ENCODE measurements at regions of chr1 and their contacts with region 1.

Region 1: DNA sequence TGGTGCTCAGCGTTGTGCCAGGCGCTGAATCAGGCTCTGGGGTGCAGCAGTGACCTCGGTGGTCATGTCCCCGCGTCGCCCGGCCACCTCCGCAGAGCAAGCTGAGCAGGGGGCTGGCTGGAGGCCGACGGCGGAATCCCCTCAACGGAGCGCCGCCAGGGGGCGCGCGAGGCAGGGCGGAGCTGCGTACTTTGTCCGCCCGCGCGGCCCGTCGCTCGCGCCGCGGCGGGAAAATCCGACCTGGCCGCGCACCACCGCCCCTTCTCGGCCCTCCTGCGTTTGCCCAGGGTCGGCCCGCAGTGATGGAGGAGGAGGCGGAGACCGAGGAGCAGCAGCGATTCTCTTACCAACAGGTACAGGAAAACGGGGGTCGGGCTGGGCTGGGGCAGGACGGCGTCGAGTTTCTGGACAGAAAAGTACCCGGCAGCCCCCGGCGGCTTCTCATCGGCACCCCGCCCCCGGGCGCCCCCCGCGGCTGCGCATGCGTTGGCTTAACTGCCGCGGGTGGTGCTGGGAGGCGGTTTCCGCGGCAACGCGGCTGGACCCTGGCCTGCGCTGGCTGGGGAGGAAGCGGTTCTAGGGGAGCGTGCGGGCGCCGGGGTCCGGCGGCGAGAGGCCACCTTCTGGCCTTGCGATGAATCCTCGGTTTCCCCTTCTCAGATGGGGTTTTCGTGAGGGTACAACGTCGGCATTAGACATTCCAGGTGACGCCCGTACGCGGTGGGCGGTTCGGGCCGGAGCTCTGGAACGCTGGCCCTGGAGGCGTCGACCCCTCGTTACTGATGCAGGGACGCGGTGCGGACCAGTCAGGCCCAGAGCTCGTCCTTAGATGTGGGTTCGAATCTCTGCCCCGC is at the start of gene CENPS:
- DNase-seq: peak; percentile 95
- H3K4me3 ChIP-seq: peak within 1 kb of the TSS; percentile 52 to 85 (median 68)
- H3K27ac ChIP-seq: peak within 1 kb of the TSS; percentile 78 to 85 (median 82)
- H3K4me1 ChIP-seq: peaks cover 0 to 19% (median 14%) of the 10 kb centered on the region in 4 donors
- H3K27me3 ChIP-seq: no peaks in the 10 kb centered on the region
- CTCF ChIP-seq: peak; percentile 94 to 99 (median 98)
- EP300 ChIP-seq: no peak
- POLR2A ChIP-seq: peak; percentile 37
- total RNA-seq, gene CENPS: 6.8 to 8.2 TPM in 2 of 4 donors, not detected in the others

Region 2: GRCh38 chr1:10378081-10378841 is 52.2 kb before region 1 on chr1:
- in situ Hi-C with region 1: loop called in 1 of 4 experiments (anchors 10 kb)
- intact Hi-C with region 1: loop called (anchors 5 kb)
- DNase-seq: no peak
- H3K4me3 ChIP-seq: no peak overlapping the region
- H3K27ac ChIP-seq: peak overlapping the region in 2 of 4 donors; percentile 44 to 68
- H3K4me1 ChIP-seq: no peaks in the 10 kb centered on the region
- H3K27me3 ChIP-seq: no peaks in the 10 kb centered on the region
- CTCF ChIP-seq: no peak
- EP300 ChIP-seq: no peak
- POLR2A ChIP-seq: no peak

Region 3: DNA sequence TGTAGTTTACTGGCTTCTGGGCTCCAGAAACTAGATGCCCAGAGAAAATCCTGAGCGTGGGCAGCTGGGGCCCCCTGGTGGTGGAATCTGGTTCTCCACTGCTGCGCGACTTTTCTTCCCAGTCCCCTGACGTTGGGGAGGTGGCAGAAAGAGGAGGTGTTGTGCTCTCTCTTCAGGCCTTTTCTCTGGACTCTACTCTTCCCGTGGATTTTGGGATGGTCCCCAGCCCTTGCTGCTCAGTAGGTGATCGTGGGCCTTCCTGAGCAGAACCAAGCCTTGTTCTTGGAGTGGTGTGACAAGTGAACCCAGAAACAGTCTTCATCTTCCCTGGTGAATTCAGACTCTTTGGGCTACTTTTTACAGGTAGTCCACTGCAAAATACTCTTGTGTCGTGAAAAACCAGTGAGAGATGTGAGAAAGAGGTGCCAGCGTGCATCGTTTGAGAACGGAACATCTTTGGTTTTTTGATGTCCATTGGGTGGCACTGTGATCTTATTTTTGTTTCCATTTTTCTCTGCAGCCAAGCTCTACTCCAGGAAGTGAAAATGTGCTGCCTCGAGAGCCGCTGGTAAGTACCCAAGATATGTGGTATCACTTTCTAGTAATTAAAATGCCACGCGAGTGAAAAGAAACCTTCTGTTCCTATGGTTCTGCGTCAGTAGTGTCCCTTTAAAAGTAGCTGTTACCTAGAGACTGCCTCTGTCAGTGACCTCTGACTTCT is 64.5 kb after region 1 on chr1:
- in situ Hi-C with region 1: loop called in 1 of 4 experiments (anchors 10 kb)
- intact Hi-C with region 1: loop called (anchors 2 kb)
- DNase-seq: peak; percentile 84
- H3K4me3 ChIP-seq: peak overlapping the region in 2 of 4 donors; percentile 13 to 34
- H3K27ac ChIP-seq: peak overlapping the region; percentile 55 to 73 (median 68)
- H3K4me1 ChIP-seq: peaks cover 0 to 21% (median 15%) of the 10 kb centered on the region in 4 donors
- H3K27me3 ChIP-seq: no peaks in the 10 kb centered on the region
- CTCF ChIP-seq: peak; percentile 91 to 97 (median 92)
- EP300 ChIP-seq: no peak
- POLR2A ChIP-seq: no peak